ENCODE measurements at regions of chr15 and their contacts with region 1.

Region 1: DNA sequence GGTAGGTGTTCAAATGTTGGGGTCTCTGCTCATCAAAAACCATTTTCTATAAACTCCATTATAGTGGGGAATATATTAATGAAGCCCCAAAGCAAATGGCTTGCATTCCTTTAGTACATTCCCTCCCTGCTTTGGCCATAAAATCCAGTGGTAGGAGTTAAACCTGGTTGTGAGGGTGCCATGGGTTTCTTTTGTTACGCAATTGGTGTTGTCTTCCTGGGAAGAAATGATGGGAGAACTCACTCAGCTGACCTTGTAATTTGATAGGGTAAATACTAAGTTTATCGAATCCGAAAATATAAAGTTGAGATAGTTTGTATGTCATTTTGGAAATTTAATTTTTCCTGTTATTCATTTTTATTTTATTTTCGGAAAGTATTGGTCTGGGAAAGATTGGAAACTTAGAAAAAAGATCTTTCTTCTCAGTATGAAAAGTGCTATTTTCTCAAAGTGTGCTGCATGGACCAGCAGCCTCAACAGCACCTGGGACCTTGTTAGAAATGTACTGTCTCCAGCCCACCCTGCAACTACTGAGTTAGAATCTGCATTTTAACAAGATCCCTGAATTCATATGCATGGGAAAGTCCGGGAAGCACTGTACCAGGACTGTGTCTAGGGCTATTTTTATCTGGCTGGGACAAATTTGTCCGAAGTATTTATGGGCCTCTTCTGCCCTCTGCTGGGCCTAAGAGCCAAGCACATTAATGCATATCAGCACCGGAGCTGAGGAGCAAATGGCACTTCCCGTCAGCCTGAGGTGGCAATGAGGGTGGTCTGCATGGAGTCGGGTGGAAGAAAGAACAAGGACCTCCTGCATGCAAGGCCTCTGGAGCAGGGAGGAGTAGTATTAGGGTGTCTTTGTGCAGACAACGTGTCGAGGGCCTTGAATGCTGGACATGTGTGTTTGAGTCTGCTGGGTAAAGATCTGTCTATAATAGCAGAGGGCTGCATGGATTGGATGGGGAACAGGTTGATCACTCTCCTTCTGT is 54.7 kb downstream of the FAM81A start:
- DNase-seq: peak; percentile 29 to 63
- H3K4me3 ChIP-seq: peak overlapping the region in 1 of 4 experiments; percentile 10; a peak in 2 of 8 replicates
- H3K27ac ChIP-seq: no peak overlapping the region
- H3K4me1 ChIP-seq: peaks cover 0 to 6% (median 2%) of the 10 kb centered on the region in 4 experiments; a peak in 2 of 7 replicates
- H3K27me3 ChIP-seq: no peaks in the 10 kb centered on the region
- CTCF ChIP-seq: peak; percentile 63 to 91 (median 90)
- EP300 ChIP-seq: no peak
- POLR2A ChIP-seq: no peak
- RAD21 ChIP-seq: peak; percentile 98

Region 2: GRCh38 chr15:59138243-59138642 is 354.4 kb before region 1 on chr15:
- CTCF ChIA-PET with region 1: interaction called, 10 read pairs
- POLR2A ChIA-PET with region 1: no interaction called
- DNase-seq: peak; percentile 66 to 83
- H3K4me3 ChIP-seq: no peak overlapping the region
- H3K27ac ChIP-seq: no peak overlapping the region
- H3K4me1 ChIP-seq: no peaks in the 10 kb centered on the region
- H3K27me3 ChIP-seq: no peaks in the 10 kb centered on the region
- CTCF ChIP-seq: peak; percentile 76 to 97 (median 81)
- EP300 ChIP-seq: no peak
- POLR2A ChIP-seq: no peak
- RAD21 ChIP-seq: peak; percentile 52 to 65

Region 3: DNA sequence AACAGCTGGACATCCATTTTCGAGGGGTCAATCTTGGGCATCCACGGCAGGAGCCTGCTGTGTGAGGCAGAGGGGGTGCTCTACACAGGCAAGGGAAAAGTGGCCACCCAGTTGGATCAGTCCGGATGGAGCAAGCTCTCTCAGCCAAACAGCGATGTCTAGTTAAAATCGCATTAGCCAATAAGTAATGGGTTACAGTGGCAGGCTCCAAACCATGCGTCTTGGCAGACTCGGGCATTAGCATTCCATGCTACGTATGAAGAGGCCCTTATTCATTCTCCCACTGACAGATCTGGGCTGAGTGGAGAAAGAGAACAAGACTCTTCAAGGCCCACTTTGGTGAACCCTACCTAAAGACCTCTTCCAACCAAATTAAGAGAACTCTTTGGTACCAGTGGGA is 338.4 kb before region 1 on chr15:
- CTCF ChIA-PET with region 1: interaction called, 11 read pairs
- POLR2A ChIA-PET with region 1: interaction called, 3 read pairs
- DNase-seq: no peak
- H3K4me3 ChIP-seq: no peak overlapping the region
- H3K27ac ChIP-seq: no peak overlapping the region
- H3K4me1 ChIP-seq: no peaks in the 10 kb centered on the region
- H3K27me3 ChIP-seq: no peaks in the 10 kb centered on the region
- CTCF ChIP-seq: no peak
- EP300 ChIP-seq: no peak
- POLR2A ChIP-seq: no peak
- RAD21 ChIP-seq: no peak

Region 4: GRCh38 chr15:59174835-59175831 is 317.6 kb before region 1 on chr15:
- CTCF ChIA-PET with region 1: interaction called, 24 read pairs
- POLR2A ChIA-PET with region 1: interaction called, 3 read pairs
- DNase-seq: peak; percentile 17 to 63
- H3K4me3 ChIP-seq: no peak overlapping the region
- H3K27ac ChIP-seq: no peak overlapping the region
- H3K4me1 ChIP-seq: no peaks in the 10 kb centered on the region
- H3K27me3 ChIP-seq: no peaks in the 10 kb centered on the region
- CTCF ChIP-seq: peak; percentile 62 to 78 (median 65)
- EP300 ChIP-seq: no peak
- POLR2A ChIP-seq: 0 out of 3 replicates have a peak, but pooled peaks of 1 of the 2 experiments have one; percentile 16
- RAD21 ChIP-seq: peak; percentile 70 to 72

Region 5: GRCh38 chr15:59406446-59406845 is 86.2 kb before region 1 on chr15:
- CTCF ChIA-PET with region 1: interaction called, 10 read pairs
- POLR2A ChIA-PET with region 1: no interaction called
- DNase-seq: no peak
- H3K4me3 ChIP-seq: no peak overlapping the region
- H3K27ac ChIP-seq: no peak overlapping the region
- H3K4me1 ChIP-seq: peaks cover 3 to 12% (median 6%) of the 10 kb centered on the region in 4 experiments; a peak in 4 of 7 replicates
- H3K27me3 ChIP-seq: peaks cover 0 to 2% (median 0%) of the 10 kb centered on the region in 4 experiments; a peak in 3 of 7 replicates
- CTCF ChIP-seq: no peak
- EP300 ChIP-seq: no peak
- POLR2A ChIP-seq: no peak
- RAD21 ChIP-seq: no peak